Heart right ventricle (tissue), 16 donors: ENCODE measurements at regions of chr20 and their contacts with region 1.

Region 1: GRCh38 chr20:60785785-60786184 is 466.3 kb upstream of the CDH4 start:
- DNase-seq: no peak
- ATAC-seq: peak in 2 of 8 donors; percentile 29 to 35
- H3K4me3 ChIP-seq: no peak overlapping the region
- H3K27ac ChIP-seq: no peak overlapping the region
- H3K4me1 ChIP-seq: no peaks in the 10 kb centered on the region
- H3K27me3 ChIP-seq: peaks cover 0 to 15% (median 8%) of the 10 kb centered on the region in 7 donors
- CTCF ChIP-seq: no peak

Region 2: GRCh38 chr20:60845146-60845545 is 59.4 kb after region 1 on chr20:
- intact Hi-C with region 1: loop called in 1 of 10 experiments (anchors 10 kb)
- DNase-seq: no peak
- ATAC-seq: no peak
- H3K4me3 ChIP-seq: no peak overlapping the region
- H3K27ac ChIP-seq: no peak overlapping the region
- H3K4me1 ChIP-seq: no peaks in the 10 kb centered on the region
- H3K27me3 ChIP-seq: peaks cover 0 to 34% (median 6%) of the 10 kb centered on the region in 7 donors
- CTCF ChIP-seq: no peak